CD4-positive, alpha-beta T cell (primary cell): ENCODE measurements at regions of chr2 and their contacts with region 1.

Region 1: GRCh38 chr2:189783927-189784867 is at the starts of genes ORMDL1 and PMS1:
- DNase-seq: peak; percentile 84 to 98 (median 92)
- ATAC-seq: peak; percentile 91
- H3K4me3 ChIP-seq: peak within 1 kb of the TSS; percentile 84
- H3K4me3 Mint-ChIP-seq: peak within 1 kb of the TSS; percentile 99
- H3K27ac ChIP-seq: peak within 1 kb of the TSS; percentile 90 to 93
- H3K27ac Mint-ChIP-seq: peak within 1 kb of the TSS; percentile 99
- H3K4me1 ChIP-seq: peaks cover 23% of the 10 kb centered on the region
- H3K4me1 Mint-ChIP-seq: peaks cover 58% of the 10 kb centered on the region
- H3K27me3 ChIP-seq: no peaks in the 10 kb centered on the region
- H3K27me3 Mint-ChIP-seq: no peaks in the 10 kb centered on the region
- CTCF ChIP-seq: no peak
- total RNA-seq, gene ORMDL1: 104 to 106 TPM
- total RNA-seq, gene PMS1: 9.6 to 9.8 TPM

Region 2: DNA sequence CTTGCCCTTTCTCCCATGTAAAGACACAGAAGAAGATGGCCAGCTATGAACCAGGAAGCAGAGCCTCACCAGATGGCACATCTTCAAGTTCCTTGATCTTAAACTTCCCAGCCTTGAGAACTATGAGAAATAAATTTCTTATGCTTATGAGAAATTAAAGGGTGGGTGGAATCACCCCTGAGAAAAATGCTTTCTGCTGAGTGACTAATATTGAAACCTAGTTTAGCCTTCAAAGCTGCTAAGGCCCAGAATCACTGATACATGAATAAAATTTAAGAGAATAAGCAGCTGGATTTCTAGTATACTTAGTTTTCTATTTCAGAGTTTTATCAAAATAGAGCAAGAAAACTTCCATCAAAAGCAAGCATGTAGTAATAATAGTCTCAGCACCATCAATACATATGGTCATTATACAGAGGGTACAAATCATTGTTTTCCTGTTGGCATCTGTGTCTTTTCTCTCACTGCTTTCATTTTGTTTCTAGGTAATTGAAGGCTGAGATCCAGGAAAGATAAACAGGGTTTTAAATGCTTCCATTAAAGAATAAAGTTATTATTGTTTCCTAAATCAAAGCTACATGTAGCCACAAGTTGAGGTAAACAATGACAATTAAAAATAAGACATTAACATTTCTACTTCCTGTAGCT is 551.3 kb before region 1 on chr2:
- CTCF ChIA-PET with region 1: no interaction called
- POLR2A ChIA-PET with region 1: no interaction called
- intact Hi-C with region 1: no loop called
- DNase-seq: no peak
- ATAC-seq: no peak
- H3K4me3 ChIP-seq: no peak overlapping the region
- H3K4me3 Mint-ChIP-seq: no peak overlapping the region
- H3K27ac ChIP-seq: no peak overlapping the region
- H3K27ac Mint-ChIP-seq: no peak overlapping the region
- H3K4me1 ChIP-seq: no peaks in the 10 kb centered on the region
- H3K4me1 Mint-ChIP-seq: no peaks in the 10 kb centered on the region
- H3K27me3 ChIP-seq: no peaks in the 10 kb centered on the region
- H3K27me3 Mint-ChIP-seq: no peaks in the 10 kb centered on the region
- CTCF ChIP-seq: no peak

Region 3: GRCh38 chr2:189440947-189441708 is 343.1 kb before region 1 on chr2 and contains the start of gene WDR75:
- CTCF ChIA-PET with region 1: no interaction called
- POLR2A ChIA-PET with region 1: interaction called, 8 read pairs
- intact Hi-C with region 1: loop called (anchors 5 to 10 kb)
- DNase-seq: peak; percentile 85 to 96 (median 90)
- ATAC-seq: peak; percentile 93
- H3K4me3 ChIP-seq: peak within 1 kb of the TSS; percentile 78
- H3K4me3 Mint-ChIP-seq: no peak within 1 kb of the TSS
- H3K27ac ChIP-seq: peak within 1 kb of the TSS; percentile 90 to 97
- H3K27ac Mint-ChIP-seq: peak within 1 kb of the TSS; percentile 97
- H3K4me1 ChIP-seq: peaks cover 21% of the 10 kb centered on the region
- H3K4me1 Mint-ChIP-seq: peaks cover 16% of the 10 kb centered on the region
- H3K27me3 ChIP-seq: no peaks in the 10 kb centered on the region
- H3K27me3 Mint-ChIP-seq: no peaks in the 10 kb centered on the region
- CTCF ChIP-seq: no peak
- total RNA-seq, gene WDR75: 38.1 to 45.3 TPM

Region 4: GRCh38 chr2:189770590-189771322 is 13.4 kb before region 1 on chr2:
- CTCF ChIA-PET with region 1: interaction called, 4 read pairs
- POLR2A ChIA-PET with region 1: interaction called, 12 read pairs
- intact Hi-C with region 1: loop called in 1 of 2 experiments (anchors 2 kb)
- DNase-seq: no peak
- ATAC-seq: no peak
- H3K4me3 ChIP-seq: no peak overlapping the region
- H3K4me3 Mint-ChIP-seq: no peak overlapping the region
- H3K27ac ChIP-seq: no peak overlapping the region
- H3K27ac Mint-ChIP-seq: no peak overlapping the region
- H3K4me1 ChIP-seq: no peaks in the 10 kb centered on the region
- H3K4me1 Mint-ChIP-seq: peaks cover 5% of the 10 kb centered on the region
- H3K27me3 ChIP-seq: no peaks in the 10 kb centered on the region
- H3K27me3 Mint-ChIP-seq: no peaks in the 10 kb centered on the region
- CTCF ChIP-seq: no peak

Region 5: GRCh38 chr2:190319555-190320498 is 535.6 kb after region 1 on chr2 and contains the start of gene HIBCH:
- CTCF ChIA-PET with region 1: no interaction called
- POLR2A ChIA-PET with region 1: no interaction called
- intact Hi-C with region 1: loop called in 1 of 2 experiments (anchors 10 kb)
- DNase-seq: peak; percentile 59 to 91 (median 80)
- ATAC-seq: peak; percentile 87
- H3K4me3 ChIP-seq: peak within 1 kb of the TSS; percentile 87
- H3K4me3 Mint-ChIP-seq: peak within 1 kb of the TSS; percentile 95
- H3K27ac ChIP-seq: peak within 1 kb of the TSS; percentile 76 to 91
- H3K27ac Mint-ChIP-seq: peak within 1 kb of the TSS; percentile 89
- H3K4me1 ChIP-seq: peaks cover 28% of the 10 kb centered on the region
- H3K4me1 Mint-ChIP-seq: peaks cover 54% of the 10 kb centered on the region
- H3K27me3 ChIP-seq: no peaks in the 10 kb centered on the region
- H3K27me3 Mint-ChIP-seq: no peaks in the 10 kb centered on the region
- CTCF ChIP-seq: peak; percentile 73
- total RNA-seq, gene HIBCH: 3.5 to 7.1 TPM

Region 6: GRCh38 chr2:191013932-191014652 is 1229.9 kb after region 1 on chr2 and contains the start of gene STAT1:
- CTCF ChIA-PET with region 1: no interaction called
- POLR2A ChIA-PET with region 1: no interaction called
- intact Hi-C with region 1: loop called in 1 of 2 experiments (anchors 10 kb)
- DNase-seq: peak; percentile 89 to 99 (median 96)
- ATAC-seq: peak; percentile 84
- H3K4me3 ChIP-seq: peak within 1 kb of the TSS; percentile 75
- H3K4me3 Mint-ChIP-seq: no peak within 1 kb of the TSS
- H3K27ac ChIP-seq: peak within 1 kb of the TSS; percentile 89 to 91
- H3K27ac Mint-ChIP-seq: no peak within 1 kb of the TSS
- H3K4me1 ChIP-seq: peaks cover 54% of the 10 kb centered on the region
- H3K4me1 Mint-ChIP-seq: peaks cover 43% of the 10 kb centered on the region
- H3K27me3 ChIP-seq: no peaks in the 10 kb centered on the region
- H3K27me3 Mint-ChIP-seq: no peaks in the 10 kb centered on the region
- CTCF ChIP-seq: no peak
- total RNA-seq, gene STAT1: 56.6 to 57.8 TPM